HCT116 (cell line): ENCODE measurements at regions of chr6 and their contacts with region 1.

Region 1: GRCh38 chr6:32692019-32692418 is 25.6 kb upstream of the HLA-DQB1 start:
- DNase-seq: peak; percentile 42
- ATAC-seq: peak; percentile 91
- H3K4me3 ChIP-seq: no peak overlapping the region
- H3K27ac ChIP-seq: no peak overlapping the region
- H3K4me1 ChIP-seq: no peaks in the 10 kb centered on the region
- H3K27me3 ChIP-seq: no peaks in the 10 kb centered on the region
- CTCF ChIP-seq: peak; percentile 65 to 80 (median 66); a peak in 5 of 6 replicates
- POLR2A ChIP-seq: no peak
- RAD21 ChIP-seq: peak; percentile 87

Region 2: DNA sequence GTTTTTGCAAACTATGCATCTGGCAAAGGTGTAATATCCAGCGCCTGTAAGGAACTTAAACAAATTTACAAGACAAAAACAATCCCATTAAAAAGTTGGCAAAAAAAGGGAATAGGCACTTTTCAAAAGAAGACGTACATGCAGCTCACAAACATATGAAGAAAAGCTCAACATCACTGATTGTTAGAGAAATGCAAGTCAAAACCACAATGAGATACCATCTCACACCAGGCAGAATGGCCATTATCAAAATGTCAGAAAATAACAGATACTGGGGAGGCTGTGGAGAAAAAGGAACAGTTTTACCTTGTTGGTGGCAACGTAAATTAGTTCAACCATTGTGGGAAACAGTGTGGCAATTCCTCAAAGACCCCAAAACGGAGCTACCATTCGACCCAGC is 374.5 kb before region 1 on chr6:
- CTCF ChIA-PET with region 1: no interaction called
- POLR2A ChIA-PET with region 1: no interaction called
- RAD21 ChIA-PET with region 1: no interaction called
- intact Hi-C with region 1: no loop called
- DNase-seq: no peak
- ATAC-seq: no peak
- H3K4me3 ChIP-seq: no peak overlapping the region
- H3K27ac ChIP-seq: no peak overlapping the region
- H3K4me1 ChIP-seq: no peaks in the 10 kb centered on the region
- H3K27me3 ChIP-seq: no peaks in the 10 kb centered on the region
- CTCF ChIP-seq: no peak
- POLR2A ChIP-seq: no peak
- RAD21 ChIP-seq: no peak

Region 3: GRCh38 chr6:32413427-32414047 is 278.5 kb before region 1 on chr6:
- CTCF ChIA-PET with region 1: interaction called, 10 read pairs
- POLR2A ChIA-PET with region 1: no interaction called
- RAD21 ChIA-PET with region 1: interaction called in 1 of 2 experiments, 3 read pairs
- intact Hi-C with region 1: no loop called
- DNase-seq: peak; percentile 69
- ATAC-seq: peak; percentile 85
- H3K4me3 ChIP-seq: no peak overlapping the region; a peak in 1 of 4 replicates
- H3K27ac ChIP-seq: no peak overlapping the region
- H3K4me1 ChIP-seq: peaks cover 0 to 12% of the 10 kb centered on the region in 2 experiments; a peak in 2 of 4 replicates
- H3K27me3 ChIP-seq: no peaks in the 10 kb centered on the region
- CTCF ChIP-seq: peak; percentile 73 to 91 (median 88)
- POLR2A ChIP-seq: no peak
- RAD21 ChIP-seq: peak; percentile 89

Region 4: GRCh38 chr6:32432050-32432450 is 260.0 kb before region 1 on chr6:
- CTCF ChIA-PET with region 1: interaction called, 11 read pairs
- POLR2A ChIA-PET with region 1: no interaction called
- RAD21 ChIA-PET with region 1: no interaction called
- intact Hi-C with region 1: loop called (anchors 2 kb)
- DNase-seq: peak; percentile 40
- ATAC-seq: no peak
- H3K4me3 ChIP-seq: no peak overlapping the region
- H3K27ac ChIP-seq: no peak overlapping the region
- H3K4me1 ChIP-seq: no peaks in the 10 kb centered on the region
- H3K27me3 ChIP-seq: no peaks in the 10 kb centered on the region
- CTCF ChIP-seq: peak; percentile 13 to 79 (median 55); a peak in 5 of 6 replicates
- POLR2A ChIP-seq: no peak
- RAD21 ChIP-seq: peak; percentile 83